ENCODE measurements at regions of chr1 and their contacts with region 1.

Region 1: GRCh38 chr1:169529068-169529696 is 43.4 kb upstream of the SLC19A2 start:
- DNase-seq: peak; percentile 42
- ATAC-seq: peak; percentile 91
- H3K4me3 Mint-ChIP-seq: peak overlapping the region; percentile 39
- H3K27ac Mint-ChIP-seq: peak overlapping the region; percentile 95
- H3K4me1 Mint-ChIP-seq: peaks cover 32% of the 10 kb centered on the region
- H3K27me3 Mint-ChIP-seq: no peaks in the 10 kb centered on the region
- CTCF ChIP-seq: no peak

Region 2: GRCh38 chr1:169485544-169486278 is 43.5 kb before region 1 on chr1 and contains the start of gene SLC19A2:
- CTCF ChIA-PET with region 1: interaction called, 13 read pairs
- POLR2A ChIA-PET with region 1: interaction called, 15 read pairs
- DNase-seq: peak; percentile 96
- ATAC-seq: peak; percentile 98
- H3K4me3 Mint-ChIP-seq: peak within 1 kb of the TSS; percentile 95
- H3K27ac Mint-ChIP-seq: peak within 1 kb of the TSS; percentile 99
- H3K4me1 Mint-ChIP-seq: peaks cover 62% of the 10 kb centered on the region
- H3K27me3 Mint-ChIP-seq: no peaks in the 10 kb centered on the region; the same call in 1 of the 2 replicates
- CTCF ChIP-seq: no peak
- total RNA-seq, gene SLC19A2: 14.6 to 15.8 TPM (median 14.7 TPM) in 3 replicates

Measured in WTC11 (cell line).